ENCODE measurements at regions of chr7 and their contacts with region 1.

Region 1: DNA sequence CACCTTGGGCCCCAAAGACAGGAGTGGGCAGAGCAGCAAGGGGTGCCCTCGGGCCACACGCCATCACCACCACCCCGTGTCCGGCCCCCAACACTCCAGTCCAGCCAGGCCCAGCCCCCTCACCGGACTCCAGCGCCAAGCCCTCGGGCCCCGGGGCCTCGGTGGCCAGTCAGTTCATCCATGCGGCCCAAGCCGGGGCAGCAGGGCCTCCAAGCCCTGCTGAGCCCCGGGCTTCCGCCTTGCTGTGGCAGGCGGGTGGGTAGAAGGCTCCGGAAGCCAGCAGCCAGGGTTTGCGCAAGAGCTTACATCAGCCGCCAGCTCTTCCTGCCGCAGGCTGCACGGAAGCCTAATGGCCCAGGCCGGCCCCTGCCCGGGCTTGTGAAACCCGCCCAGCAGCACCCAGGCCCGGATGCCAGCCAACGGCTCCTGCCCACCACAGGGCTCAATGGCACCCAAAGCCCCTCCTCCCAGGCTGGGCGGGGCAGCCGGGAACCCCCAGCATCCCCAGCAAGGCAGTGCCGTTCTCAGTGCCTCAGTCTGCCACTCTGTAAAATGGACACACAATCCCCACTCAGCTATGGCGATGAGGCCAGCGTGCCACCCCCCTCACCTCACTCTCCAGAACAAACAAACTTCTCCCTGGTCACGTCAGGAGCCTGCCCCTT is 26.5 kb downstream of the TNRC18 start:
- DNase-seq: peak; percentile 87
- ATAC-seq: peak; percentile 94
- H3K4me3 Mint-ChIP-seq: peak overlapping the region; percentile 86
- H3K27ac Mint-ChIP-seq: peak overlapping the region; percentile 95
- H3K4me1 Mint-ChIP-seq: peaks cover 15% of the 10 kb centered on the region
- H3K27me3 Mint-ChIP-seq: no peaks in the 10 kb centered on the region

Region 2: DNA sequence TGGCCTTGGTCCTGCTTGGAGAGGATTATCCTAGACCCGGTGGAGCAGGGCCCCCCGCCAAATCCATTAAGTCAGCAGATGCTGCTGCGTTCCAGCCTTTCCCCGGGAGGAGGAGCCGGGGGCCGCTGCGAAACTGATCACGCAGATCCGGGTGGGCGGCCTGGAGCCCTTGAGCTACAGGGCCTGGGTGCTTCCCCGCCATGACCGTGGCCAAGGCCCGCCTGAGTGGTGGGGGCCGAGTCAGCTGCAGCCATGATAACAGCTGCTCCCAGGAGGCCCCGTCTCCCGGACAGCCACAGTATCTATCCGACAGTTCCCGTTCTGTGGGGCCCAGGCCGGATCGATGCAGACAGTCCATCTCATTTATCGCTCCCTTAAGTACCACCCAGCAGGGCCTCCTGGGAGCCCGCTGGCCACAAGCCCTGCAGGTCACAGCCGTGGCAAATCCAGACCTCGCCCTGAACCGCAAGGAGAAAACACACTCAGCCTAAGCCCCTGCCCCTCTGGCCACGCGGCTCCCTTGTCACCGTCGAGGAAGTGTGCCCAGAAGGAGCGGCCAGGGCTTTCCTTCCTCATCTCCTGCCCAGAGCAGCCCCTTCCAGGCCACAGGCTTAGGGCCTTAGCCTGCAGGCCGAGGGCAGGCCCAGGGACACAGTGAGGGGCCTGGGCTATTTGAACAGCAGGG is 148.8 kb before region 1 on chr7:
- POLR2A ChIA-PET with region 1: no interaction called
- DNase-seq: no peak
- ATAC-seq: no peak
- H3K4me3 Mint-ChIP-seq: no peak overlapping the region
- H3K27ac Mint-ChIP-seq: no peak overlapping the region
- H3K4me1 Mint-ChIP-seq: no peaks in the 10 kb centered on the region
- H3K27me3 Mint-ChIP-seq: no peaks in the 10 kb centered on the region

Region 3: DNA sequence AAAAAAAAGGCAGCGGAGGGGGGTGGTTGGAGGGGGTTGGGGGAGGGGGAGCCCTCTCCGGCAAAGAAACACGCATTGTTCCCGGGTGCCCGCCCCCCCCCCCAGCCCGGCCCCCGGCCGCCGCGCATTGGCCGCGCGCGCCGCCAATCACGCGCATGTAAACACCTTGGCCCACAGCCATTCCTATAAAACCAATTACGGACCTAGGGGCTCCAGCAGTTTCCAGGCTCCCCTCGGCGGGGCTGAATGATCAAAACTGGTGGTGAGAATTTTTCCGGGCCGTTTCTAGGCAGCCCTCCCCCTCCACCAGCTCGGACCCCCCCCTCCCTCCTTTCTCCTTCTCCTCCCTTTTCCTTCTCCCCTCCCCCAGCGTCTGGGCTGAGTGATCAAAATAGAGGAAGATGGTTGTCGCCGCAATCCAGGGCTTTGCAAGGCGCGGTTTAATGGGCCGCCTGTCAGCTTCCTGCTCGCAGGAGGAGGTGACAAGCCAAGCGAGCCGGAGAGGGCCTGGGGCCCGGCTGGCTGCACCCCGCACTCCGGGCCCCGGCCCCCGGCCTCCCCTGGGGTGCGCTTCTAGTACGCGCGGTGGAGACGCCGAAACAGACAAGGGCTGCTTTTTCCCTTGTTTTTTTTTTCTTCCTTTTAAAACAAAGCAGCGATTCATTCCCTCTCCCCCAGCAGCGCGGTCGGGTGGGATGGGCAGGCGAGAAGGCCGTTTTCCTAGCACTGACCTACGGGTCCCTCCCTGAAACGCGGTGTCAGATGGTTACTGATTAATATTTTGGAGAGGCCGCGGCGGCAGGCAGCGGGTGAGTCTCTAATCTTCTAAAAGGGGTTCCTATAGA is 26.9 kb after region 1 on chr7:
- POLR2A ChIA-PET with region 1: interaction called, 14 read pairs
- DNase-seq: peak; percentile 66
- ATAC-seq: peak; percentile 39
- H3K4me3 Mint-ChIP-seq: peak overlapping the region; percentile 81
- H3K27ac Mint-ChIP-seq: peak overlapping the region; percentile 34
- H3K4me1 Mint-ChIP-seq: peaks cover 18% of the 10 kb centered on the region
- H3K27me3 Mint-ChIP-seq: peaks cover 72% of the 10 kb centered on the region

Region 4: DNA sequence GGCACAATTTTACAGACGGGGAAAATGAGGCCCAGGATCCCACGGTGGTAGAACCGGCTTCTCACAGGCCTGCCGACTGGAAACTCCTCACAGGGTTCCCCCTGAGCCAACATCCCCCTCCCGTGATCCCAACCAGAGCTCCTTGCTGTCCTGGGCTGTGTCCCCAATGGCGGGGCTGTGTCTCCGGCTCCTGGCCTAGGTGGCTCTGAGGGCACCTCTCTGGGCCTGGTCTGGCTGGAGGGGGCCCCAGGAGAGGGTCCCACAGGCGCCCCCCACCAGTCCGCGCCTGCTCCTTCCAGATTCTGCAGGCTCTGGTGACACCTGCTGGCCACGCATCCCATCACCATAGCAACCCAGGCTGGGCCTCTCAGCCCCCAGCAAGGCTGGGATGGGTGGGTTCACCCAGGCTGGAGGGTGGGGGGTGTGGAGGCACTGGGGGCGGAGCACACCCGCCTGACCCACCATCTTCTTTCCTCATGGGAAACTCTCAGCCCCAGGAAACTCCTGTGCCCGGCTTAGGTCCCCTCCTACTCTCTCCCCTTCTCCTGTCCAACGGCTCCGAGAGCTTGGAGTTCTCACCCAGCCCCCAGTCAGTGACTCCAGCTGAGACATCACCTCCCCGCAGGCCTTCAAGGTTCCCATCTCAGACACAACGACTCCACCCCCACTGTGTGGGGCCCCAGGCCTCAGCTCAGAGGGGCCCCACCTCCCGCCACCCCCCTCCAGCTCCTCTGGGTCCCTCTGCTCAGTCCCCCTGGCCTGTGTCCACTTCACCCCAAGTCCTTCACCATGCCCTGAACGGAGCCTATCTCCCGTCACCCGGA is 53.6 kb after region 1 on chr7:
- POLR2A ChIA-PET with region 1: interaction called, 14 read pairs
- DNase-seq: peak; percentile 56
- ATAC-seq: peak; percentile 68
- H3K4me3 Mint-ChIP-seq: no peak overlapping the region
- H3K27ac Mint-ChIP-seq: no peak overlapping the region
- H3K4me1 Mint-ChIP-seq: no peaks in the 10 kb centered on the region
- H3K27me3 Mint-ChIP-seq: peaks cover 4% of the 10 kb centered on the region

Measured in activated naive CD8-positive, alpha-beta T cell treated with anti-CD3 and anti-CD28 coated beads, Interleukin-2, amount 10 ng/mL, durations not matched to agents 7 days and 5 days (primary cell).